Caco-2 (cell line): ENCODE measurements at regions of chr1 and their contacts with region 1.

Region 1: GRCh38 chr1:77978969-77979876 is at the start of gene FUBP1:
- DNase-seq: peak; percentile 91 to 95
- H3K4me3 ChIP-seq: peak within 1 kb of the TSS; percentile 89
- H3K4me3 Mint-ChIP-seq: no peak within 1 kb of the TSS
- H3K27ac Mint-ChIP-seq: no peak within 1 kb of the TSS
- H3K4me1 ChIP-seq: peaks cover 24% of the 10 kb centered on the region
- H3K4me1 Mint-ChIP-seq: no peaks in the 10 kb centered on the region
- H3K27me3 ChIP-seq: no peaks in the 10 kb centered on the region
- H3K27me3 Mint-ChIP-seq: no peaks in the 10 kb centered on the region
- CTCF ChIP-seq: peak; percentile 35 to 66
- total RNA-seq, gene FUBP1: 90.1 and 92.6 TPM in 2 replicates

Region 2: DNA sequence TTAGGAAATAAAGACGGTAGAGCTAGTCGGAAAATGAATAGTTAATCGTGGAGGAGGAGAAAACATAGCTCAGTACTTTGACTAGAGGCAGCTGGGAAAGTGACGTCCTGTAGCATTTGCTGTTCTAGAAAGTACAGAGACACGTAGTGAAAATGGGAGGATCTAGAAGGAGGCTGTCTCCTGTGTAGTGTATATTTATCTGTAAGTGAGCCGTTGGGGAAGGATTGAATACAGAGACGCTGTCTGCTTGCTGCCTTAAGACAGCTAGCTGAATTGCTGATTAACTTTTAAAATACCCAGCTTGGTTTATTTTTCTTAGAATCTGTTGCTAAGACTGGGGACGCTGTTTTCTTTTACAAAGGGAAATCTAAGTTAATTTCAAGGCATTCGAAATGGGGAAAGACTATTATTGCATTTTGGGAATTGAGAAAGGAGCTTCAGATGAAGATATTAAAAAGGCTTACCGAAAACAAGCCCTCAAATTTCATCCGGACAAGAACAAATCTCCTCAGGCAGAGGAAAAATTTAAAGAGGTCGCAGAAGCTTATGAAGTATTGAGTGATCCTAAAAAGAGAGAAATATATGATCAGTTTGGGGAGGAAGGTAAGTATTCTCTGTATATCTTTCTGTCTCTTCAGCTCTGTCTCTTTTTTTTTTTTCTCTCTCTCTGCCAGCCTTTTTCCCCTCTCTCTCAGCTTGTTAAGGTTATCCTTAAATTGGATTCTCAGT is 25.7 kb after region 1 on chr1 and contains the start of gene DNAJB4:
- CTCF ChIA-PET with region 1: no interaction called
- POLR2A ChIA-PET with region 1: interaction called, 25 read pairs
- intact Hi-C with region 1: loop called (anchors 1 kb)
- DNase-seq: peak; percentile 69 to 80
- H3K4me3 ChIP-seq: peak within 1 kb of the TSS; percentile 32
- H3K4me3 Mint-ChIP-seq: peak within 1 kb of the TSS; percentile 79
- H3K27ac Mint-ChIP-seq: peak within 1 kb of the TSS; percentile 90
- H3K4me1 ChIP-seq: no peaks in the 10 kb centered on the region
- H3K4me1 Mint-ChIP-seq: no peaks in the 10 kb centered on the region
- H3K27me3 ChIP-seq: no peaks in the 10 kb centered on the region
- H3K27me3 Mint-ChIP-seq: no peaks in the 10 kb centered on the region
- CTCF ChIP-seq: no peak
- total RNA-seq, gene DNAJB4: 5.4 and 6.5 TPM in 2 replicates